ENCODE measurements at regions of chr2 and their contacts with region 1.

Region 1: DNA sequence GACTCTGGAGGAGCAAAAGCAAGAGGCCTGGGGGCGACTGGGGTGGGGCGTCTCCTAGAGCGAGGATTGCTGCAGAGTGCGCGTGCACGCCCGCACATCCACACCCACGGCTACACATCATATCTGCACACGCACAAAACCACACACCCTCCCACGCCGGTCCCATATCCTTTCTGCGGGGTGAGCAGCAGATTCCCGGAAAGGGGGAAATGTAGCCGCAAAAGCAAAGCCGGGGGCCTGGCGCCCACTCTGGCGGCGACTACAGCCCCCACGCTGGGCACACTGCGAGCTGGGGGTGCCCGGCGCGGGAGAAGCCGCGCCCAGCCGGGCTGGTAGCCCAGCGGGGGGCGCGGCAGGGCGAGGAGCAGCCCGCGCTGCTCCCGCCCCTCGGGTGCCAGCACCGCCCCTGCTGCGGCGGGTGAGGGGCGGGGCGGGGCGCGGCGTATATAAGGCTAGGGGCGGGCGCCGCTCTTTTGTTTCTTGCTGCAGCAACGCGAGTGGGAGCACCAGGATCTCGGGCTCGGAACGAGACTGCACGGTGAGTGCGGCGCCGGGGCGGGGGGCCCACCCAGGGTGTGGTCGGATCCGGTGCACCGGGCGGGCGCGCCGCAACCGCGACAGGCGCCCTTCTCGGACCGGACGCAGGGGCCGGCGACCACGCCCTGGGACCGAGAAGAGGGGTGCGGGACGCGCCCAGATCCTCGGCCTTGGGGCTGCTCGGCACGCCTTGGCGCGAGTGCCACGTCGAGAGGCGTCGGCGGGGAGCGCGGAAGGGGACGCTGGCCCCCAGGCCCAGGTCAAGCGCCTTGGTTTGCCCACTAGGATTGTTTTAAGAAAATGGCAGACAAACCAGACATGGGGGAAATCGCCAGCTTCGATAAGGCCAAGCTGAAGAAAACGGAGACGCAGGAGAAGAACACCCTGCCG is at the start of gene TMSB10:
- DNase-seq: peak; percentile 73
- ATAC-seq: peak; percentile 88
- H3K4me3 ChIP-seq: peak within 1 kb of the TSS; percentile 90 to 98 (median 98)
- H3K27ac ChIP-seq: peak within 1 kb of the TSS; percentile 65
- H3K4me1 ChIP-seq: peaks cover 31% of the 10 kb centered on the region
- H3K27me3 ChIP-seq: peaks cover 2 to 32% of the 10 kb centered on the region in 2 experiments; a peak in 2 of 5 replicates
- CTCF ChIP-seq: peak; percentile 35; the same call in 1 of the 2 replicates
- EP300 ChIP-seq: peak in 1 of 2 experiments; percentile 29; a peak in 1 of 4 replicates
- POLR2A ChIP-seq: peak; percentile 87 to 99
- RAD21 ChIP-seq: peak; percentile 61
- total RNA-seq, gene TMSB10: 708 and 754 TPM in 2 replicates

Region 2: DNA sequence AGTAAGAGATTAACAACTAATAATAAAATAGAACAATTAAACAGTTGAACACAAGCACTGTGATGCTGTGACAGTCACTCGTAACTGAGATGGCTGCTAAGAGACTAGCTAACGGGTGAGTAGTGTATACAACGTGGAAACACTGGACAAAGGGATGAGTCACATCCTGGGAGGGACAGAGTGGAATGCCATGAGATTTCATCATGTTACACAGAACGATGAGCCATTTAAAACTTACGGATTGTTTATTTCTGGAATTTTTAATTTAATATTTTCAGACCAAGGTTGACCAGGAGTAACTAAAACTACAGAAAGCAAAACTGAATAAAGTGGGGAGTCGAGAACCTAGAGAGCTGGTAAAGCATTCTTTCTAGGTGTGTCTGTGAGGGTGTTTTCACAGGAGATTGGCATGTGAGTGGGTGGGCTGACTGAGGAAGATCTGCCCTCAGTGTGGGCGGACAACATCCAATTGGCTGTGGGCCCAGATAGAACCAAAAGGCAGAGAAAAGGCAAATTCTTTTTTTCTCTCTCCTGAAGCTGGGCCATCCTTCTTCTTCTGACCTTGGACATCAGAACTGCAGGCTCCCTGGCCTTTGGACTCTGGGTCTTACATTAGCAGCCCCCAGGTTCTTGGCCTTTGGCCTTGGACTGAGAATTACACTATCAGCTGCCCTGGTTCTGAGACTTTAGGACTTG is 14.6 kb after region 1 on chr2:
- CTCF ChIA-PET with region 1: interaction called, 64 read pairs
- POLR2A ChIA-PET with region 1: interaction called, 141 read pairs
- in situ Hi-C with region 1: no loop called
- intact Hi-C with region 1: loop called (anchors 1 kb)
- DNase-seq: peak; percentile 95
- ATAC-seq: peak; percentile 91
- H3K4me3 ChIP-seq: peak overlapping the region; percentile 32 to 56 (median 48)
- H3K27ac ChIP-seq: peak overlapping the region; percentile 72
- H3K4me1 ChIP-seq: peaks cover 35% of the 10 kb centered on the region
- H3K27me3 ChIP-seq: no peaks in the 10 kb centered on the region
- CTCF ChIP-seq: no peak
- EP300 ChIP-seq: peak; percentile 28 to 79; a peak in 2 of 4 replicates
- POLR2A ChIP-seq: peak; percentile 35 to 53; a peak in 2 of 4 replicates
- RAD21 ChIP-seq: no peak

Measured in HepG2 (cell line).